Dendritic cell treated with granulocyte-macrophage colony-stimulating factor and Interleukin-4, amounts not matched to agents 40 ng/mL and 50 ng/mL, for 4 days (primary cell): ENCODE measurements at regions of chr12 and their contacts with region 1.

Region 1: GRCh38 chr12:56127888-56128669 is at the start of gene ESYT1:
- H3K4me3 Mint-ChIP-seq: peak within 1 kb of the TSS; percentile 98
- H3K27ac Mint-ChIP-seq: peak within 1 kb of the TSS; percentile 85
- H3K4me1 Mint-ChIP-seq: peaks cover 71% of the 10 kb centered on the region
- H3K27me3 Mint-ChIP-seq: no peaks in the 10 kb centered on the region

Region 2: DNA sequence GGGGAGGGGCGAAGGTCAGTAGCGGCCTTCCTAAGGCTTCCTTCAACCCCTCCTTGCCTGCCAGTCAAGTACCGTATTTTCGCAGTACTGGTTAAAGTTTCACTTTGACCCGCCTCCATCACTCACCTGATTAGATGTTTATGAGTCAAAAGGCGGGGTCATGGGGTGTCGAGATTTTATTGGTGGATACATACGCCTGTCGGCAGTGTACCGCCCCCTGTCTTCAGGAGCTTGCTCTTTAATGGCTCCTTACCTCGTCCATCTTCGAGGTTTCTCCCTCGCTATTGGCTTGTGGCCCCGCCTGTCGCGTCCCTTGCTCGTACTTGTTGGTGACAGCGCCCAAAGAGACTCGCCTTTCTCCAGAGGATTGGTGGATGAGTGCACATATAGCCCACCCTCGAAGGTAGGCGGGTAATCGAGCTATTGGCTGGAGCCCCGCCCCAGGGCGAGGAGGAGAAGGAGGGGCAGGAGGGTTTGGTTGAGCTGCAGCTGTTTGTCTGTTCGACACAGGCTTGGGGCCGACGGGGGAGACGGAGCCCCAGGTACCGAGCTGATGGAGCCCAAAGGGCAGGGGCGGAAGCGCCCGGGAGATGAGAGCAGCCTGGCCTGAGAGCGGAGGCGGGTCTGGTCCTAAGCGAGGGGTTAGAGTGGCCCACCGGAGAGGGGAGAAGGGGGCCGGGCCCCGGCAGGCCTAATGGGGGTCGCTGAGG is 154.3 kb before region 1 on chr12 and contains the start of gene RAB5B:
- intact Hi-C with region 1: no loop called
- H3K4me3 Mint-ChIP-seq: no peak within 1 kb of the TSS
- H3K27ac Mint-ChIP-seq: no peak within 1 kb of the TSS
- H3K4me1 Mint-ChIP-seq: peaks cover 34% of the 10 kb centered on the region
- H3K27me3 Mint-ChIP-seq: no peaks in the 10 kb centered on the region

Region 3: GRCh38 chr12:56158029-56158925 is 30.2 kb after region 1 on chr12 and contains the start of gene MYL6:
- intact Hi-C with region 1: loop called (anchors 1 kb)
- H3K4me3 Mint-ChIP-seq: peak within 1 kb of the TSS; percentile 93
- H3K27ac Mint-ChIP-seq: peak within 1 kb of the TSS; percentile 98
- H3K4me1 Mint-ChIP-seq: peaks cover 63% of the 10 kb centered on the region
- H3K27me3 Mint-ChIP-seq: no peaks in the 10 kb centered on the region

Region 4: DNA sequence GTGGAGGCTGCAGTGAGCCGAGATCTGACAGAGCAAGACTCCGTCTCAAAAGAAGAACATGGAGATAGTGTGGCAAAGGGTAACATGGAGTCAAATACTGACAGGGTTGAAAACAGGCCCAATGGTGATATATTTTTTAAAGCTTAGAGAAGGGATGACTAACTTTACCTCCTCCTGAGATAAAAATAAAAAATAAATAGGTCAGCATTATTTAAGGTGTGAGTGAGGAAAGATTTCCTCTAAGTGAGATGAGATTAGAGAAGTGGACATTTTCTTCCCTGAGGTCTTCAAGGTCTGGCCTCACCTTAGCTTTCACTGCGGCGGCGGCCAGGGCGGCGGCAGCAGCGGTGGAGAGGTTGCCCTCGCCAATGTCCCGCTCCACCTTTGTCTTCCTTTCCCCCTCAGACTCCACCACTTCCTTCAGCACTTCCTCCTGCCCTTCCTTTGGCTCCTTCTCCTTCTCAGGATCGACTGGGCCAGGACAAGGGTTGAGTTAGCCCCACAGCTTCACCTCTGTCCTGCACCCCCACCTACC is 41.2 kb after region 1 on chr12:
- intact Hi-C with region 1: no loop called
- H3K4me3 Mint-ChIP-seq: no peak overlapping the region
- H3K27ac Mint-ChIP-seq: no peak overlapping the region
- H3K4me1 Mint-ChIP-seq: no peaks in the 10 kb centered on the region
- H3K27me3 Mint-ChIP-seq: no peaks in the 10 kb centered on the region